Breast epithelium (tissue), 4 donors: ENCODE measurements at regions of chr15 and their contacts with region 1.

Region 1: DNA sequence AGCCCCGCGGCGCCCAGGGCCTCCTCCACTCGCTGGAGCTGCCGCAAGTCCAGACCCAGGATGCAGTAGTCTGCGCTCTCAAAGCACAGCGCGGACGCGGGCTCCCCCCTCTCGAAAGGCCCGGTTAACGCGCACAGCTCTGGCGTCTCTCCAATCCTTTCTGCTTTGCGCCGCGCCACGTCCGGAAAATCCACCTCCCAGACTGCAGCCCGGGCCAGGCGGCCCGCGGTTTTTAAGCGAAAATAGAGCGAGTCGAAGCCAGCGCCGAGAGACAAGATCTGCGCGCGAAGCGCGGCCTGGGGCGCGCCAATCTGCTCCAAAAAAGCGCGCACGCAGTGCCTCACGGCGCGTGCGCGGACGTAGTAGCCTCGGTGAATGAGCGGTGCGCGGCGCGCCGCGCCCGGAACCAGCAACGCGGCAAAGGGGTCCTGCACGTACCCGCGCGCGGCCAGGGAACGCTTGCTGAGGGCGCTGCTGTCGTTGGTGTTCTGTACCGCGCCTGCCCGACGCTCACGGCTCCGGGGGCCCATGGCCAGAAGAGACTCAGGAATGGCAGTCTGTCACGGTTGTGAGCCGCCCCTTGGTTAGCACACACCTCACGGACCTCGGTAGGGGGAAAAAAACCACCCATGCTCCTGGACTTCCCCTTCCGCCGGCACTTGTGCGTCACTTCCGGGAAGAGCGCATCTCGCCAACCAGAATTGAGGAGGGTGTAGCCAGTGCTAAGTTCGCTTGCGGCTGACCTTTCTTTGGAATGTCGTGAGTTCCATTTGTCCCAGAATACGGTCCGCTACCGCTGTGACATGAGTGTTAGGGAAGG is at the start of gene LCMT2:
- DNase-seq: peak; percentile 84 to 86
- H3K4me3 ChIP-seq: peak within 1 kb of the TSS; percentile 68 to 95 (median 88)
- H3K27ac ChIP-seq: peak within 1 kb of the TSS; percentile 94 to 98
- H3K4me1 ChIP-seq: peaks cover 0 to 12% of the 10 kb centered on the region in 2 donors
- H3K27me3 ChIP-seq: no peaks in the 10 kb centered on the region
- CTCF ChIP-seq: peak in 1 of 3 donors; percentile 18
- POLR2A ChIP-seq: no peak
- total RNA-seq, gene LCMT2: 3.8 to 9.5 (median 6.6) TPM

Region 2: GRCh38 chr15:41553731-41554130 is 1776.4 kb before region 1 on chr15:
- intact Hi-C with region 1: loop called (anchors 5 kb)
- DNase-seq: no peak
- H3K4me3 ChIP-seq: no peak overlapping the region
- H3K27ac ChIP-seq: no peak overlapping the region
- H3K4me1 ChIP-seq: no peaks in the 10 kb centered on the region
- H3K27me3 ChIP-seq: no peaks in the 10 kb centered on the region
- CTCF ChIP-seq: no peak
- POLR2A ChIP-seq: no peak